ENCODE measurements at regions of chr22 and their contacts with region 1.

Region 1: DNA sequence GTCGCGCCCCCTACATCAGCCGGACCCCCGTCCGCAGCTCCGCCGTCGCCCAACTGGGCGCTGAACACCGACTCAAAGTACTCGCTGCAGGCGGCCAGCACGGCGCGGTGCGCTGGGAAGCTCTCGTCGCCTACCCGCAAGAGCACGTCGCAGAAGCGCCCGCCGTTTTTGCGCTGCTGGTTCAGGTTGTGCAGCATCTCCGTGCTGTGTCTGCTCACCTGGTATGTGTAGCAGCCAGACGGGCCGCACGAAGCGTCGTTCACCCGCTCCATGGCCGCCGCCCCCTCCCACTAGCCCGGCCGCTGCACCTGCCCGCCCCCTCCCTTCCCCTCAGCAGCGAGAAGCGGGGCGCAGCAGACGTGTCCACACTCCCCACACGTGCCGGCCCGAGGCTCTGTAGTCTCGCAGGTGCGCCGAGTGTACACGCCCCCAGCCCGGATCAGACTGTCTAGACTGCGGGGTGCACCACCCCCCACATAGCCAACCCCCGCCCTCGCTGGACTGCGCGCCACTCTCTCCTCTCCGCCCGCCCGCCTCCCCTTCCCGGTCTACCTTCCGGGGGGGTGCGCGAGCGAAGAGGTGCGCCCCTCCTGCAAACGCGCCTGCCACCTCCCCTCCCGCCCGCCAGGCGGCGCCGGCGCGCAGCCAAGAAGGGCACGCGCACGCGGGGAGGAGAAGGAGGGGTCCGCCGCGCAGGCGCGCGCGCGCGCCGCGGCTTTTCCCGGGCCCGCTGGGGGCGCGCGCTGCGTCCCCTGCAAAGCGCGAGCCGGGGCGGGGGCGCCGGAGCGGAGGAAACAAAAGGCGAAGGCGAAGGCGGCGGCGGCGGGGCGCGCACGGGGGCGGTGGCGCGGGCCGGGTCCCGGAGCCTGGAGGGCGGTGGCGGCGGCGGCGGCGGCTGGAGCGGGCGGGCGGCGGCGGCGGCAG is 553 bp downstream of the PATZ1 start:
- DNase-seq: peak; percentile 53 to 91
- H3K4me3 ChIP-seq: peak overlapping the region; percentile 64 to 93 (median 78)
- H3K27ac ChIP-seq: peak overlapping the region; percentile 74; the same call in 1 of the 2 replicates
- H3K4me1 ChIP-seq: peaks cover 0 to 41% (median 34%) of the 10 kb centered on the region in 4 experiments; a peak in 6 of 7 replicates
- H3K27me3 ChIP-seq: no peaks in the 10 kb centered on the region
- CTCF ChIP-seq: peak; percentile 86 to 93 (median 87)
- EP300 ChIP-seq: peak in 1 of 2 experiments; percentile 48; a peak in 1 of 3 replicates
- POLR2A ChIP-seq: peak; percentile 50 to 71
- RAD21 ChIP-seq: peak; percentile 40 to 71

Region 2: GRCh38 chr22:31075961-31076360 is 269.6 kb before region 1 on chr22:
- CTCF ChIA-PET with region 1: no interaction called
- POLR2A ChIA-PET with region 1: no interaction called
- DNase-seq: no peak
- H3K4me3 ChIP-seq: no peak overlapping the region
- H3K27ac ChIP-seq: no peak overlapping the region
- H3K4me1 ChIP-seq: peaks cover 0 to 4% (median 2%) of the 10 kb centered on the region in 4 experiments; a peak in 3 of 7 replicates
- H3K27me3 ChIP-seq: no peaks in the 10 kb centered on the region
- CTCF ChIP-seq: no peak
- EP300 ChIP-seq: no peak
- POLR2A ChIP-seq: no peak
- RAD21 ChIP-seq: no peak

Region 3: DNA sequence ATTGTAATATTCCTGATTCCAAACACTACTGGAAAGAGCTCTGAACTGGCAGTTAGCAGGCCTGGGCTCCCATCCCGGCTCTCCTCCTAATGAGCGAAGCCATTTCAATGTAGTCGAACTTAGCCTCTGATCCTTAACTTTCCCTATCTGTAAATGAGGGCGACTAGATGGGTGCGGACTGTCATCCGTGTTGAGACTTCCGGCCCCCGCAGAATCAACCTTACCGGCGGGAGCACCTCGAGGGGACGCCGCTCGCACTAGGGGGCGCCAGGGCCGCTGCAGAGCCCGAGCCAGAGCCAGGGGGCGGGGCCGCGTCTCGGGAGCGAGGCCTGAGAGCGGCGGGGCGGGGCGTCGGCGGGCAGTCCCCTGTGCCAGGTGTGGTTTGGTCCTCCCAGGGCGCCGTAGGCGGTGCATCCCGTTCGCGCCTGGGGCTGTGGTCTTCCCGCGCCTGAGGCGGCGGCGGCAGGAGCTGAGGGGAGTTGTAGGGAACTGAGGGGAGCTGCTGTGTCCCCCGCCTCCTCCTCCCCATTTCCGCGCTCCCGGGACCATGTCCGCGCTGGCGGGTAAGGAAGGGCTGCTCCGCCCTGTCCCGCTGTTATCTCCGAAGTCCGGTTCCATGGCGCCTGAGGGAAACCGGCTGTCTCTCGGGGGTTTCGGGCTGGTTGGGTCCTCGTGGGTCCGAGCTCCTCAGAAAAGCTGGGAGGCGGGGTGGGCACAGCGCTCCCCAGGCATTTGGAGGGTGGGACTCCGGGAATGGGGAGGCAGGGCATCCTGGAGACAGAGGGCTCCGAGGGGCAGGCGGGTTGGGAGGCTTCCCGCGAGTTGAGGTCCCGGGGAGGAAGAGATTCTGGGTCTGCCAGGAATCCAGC is 133.5 kb before region 1 on chr22 and contains the start of gene LIMK2:
- CTCF ChIA-PET with region 1: no interaction called
- POLR2A ChIA-PET with region 1: interaction called, 11 read pairs
- DNase-seq: peak; percentile 83 to 98
- H3K4me3 ChIP-seq: peak within 1 kb of the TSS; percentile 76 to 96 (median 93)
- H3K27ac ChIP-seq: peak within 1 kb of the TSS; percentile 73; the same call in 1 of the 2 replicates
- H3K4me1 ChIP-seq: peaks cover 0 to 7% (median 4%) of the 10 kb centered on the region in 4 experiments; a peak in 5 of 7 replicates
- H3K27me3 ChIP-seq: no peaks in the 10 kb centered on the region
- CTCF ChIP-seq: peak; percentile 63 to 82 (median 77)
- EP300 ChIP-seq: no peak
- POLR2A ChIP-seq: peak; percentile 87 to 92
- RAD21 ChIP-seq: peak; percentile 56 to 70
- total RNA-seq, gene LIMK2: 37.6 and 41.1 TPM in 2 replicates

Region 4: DNA sequence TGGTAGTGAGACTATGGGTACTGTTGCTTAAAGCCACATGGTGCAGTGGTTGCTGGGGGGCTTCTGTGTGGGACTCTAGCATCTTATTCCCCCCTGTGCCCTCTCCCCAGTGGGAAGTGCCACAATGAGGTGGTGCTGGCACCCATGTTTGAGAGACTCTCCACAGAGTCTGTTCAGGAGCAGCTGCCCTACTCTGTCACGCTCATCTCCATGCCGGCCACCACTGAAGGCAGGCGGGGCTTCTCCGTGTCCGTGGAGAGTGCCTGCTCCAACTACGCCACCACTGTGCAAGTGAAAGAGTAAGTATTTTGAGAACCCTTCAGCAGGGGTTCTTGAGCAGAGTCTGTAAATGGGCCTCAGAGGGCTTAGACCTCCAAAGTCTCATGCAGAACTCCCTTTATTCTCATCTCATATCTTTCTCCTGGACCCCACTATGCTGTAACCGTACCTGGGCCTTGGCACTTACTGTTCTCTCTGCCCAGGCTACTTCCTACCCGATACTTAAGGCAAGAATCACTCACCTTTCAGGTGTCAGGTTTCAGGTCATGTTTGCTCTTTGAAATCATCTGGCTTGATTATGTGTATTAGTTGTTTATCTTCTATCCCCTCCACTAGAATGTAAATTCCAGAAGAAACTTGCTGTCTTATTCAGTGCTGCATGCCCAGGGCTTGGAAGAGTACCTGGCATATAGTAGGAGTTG is 85.7 kb before region 1 on chr22:
- CTCF ChIA-PET with region 1: no interaction called
- POLR2A ChIA-PET with region 1: no interaction called
- DNase-seq: no peak
- H3K4me3 ChIP-seq: no peak overlapping the region
- H3K27ac ChIP-seq: no peak overlapping the region
- H3K4me1 ChIP-seq: no peaks in the 10 kb centered on the region
- H3K27me3 ChIP-seq: no peaks in the 10 kb centered on the region
- CTCF ChIP-seq: no peak
- EP300 ChIP-seq: no peak
- POLR2A ChIP-seq: no peak
- RAD21 ChIP-seq: no peak

Region 5: GRCh38 chr22:31290494-31291471 is 54.8 kb before region 1 on chr22:
- CTCF ChIA-PET with region 1: no interaction called
- POLR2A ChIA-PET with region 1: interaction called, 13 read pairs
- DNase-seq: peak; percentile 53 to 90
- H3K4me3 ChIP-seq: peak overlapping the region; percentile 28 to 62 (median 38)
- H3K27ac ChIP-seq: no peak overlapping the region
- H3K4me1 ChIP-seq: peaks cover 0 to 14% (median 5%) of the 10 kb centered on the region in 4 experiments; a peak in 4 of 7 replicates
- H3K27me3 ChIP-seq: peaks cover 6 to 30% (median 20%) of the 10 kb centered on the region in 4 experiments; a peak in 6 of 7 replicates
- CTCF ChIP-seq: no peak
- EP300 ChIP-seq: no peak
- POLR2A ChIP-seq: peak in 1 of 2 experiments; percentile 71; a peak in 2 of 3 replicates
- RAD21 ChIP-seq: no peak

Region 6: DNA sequence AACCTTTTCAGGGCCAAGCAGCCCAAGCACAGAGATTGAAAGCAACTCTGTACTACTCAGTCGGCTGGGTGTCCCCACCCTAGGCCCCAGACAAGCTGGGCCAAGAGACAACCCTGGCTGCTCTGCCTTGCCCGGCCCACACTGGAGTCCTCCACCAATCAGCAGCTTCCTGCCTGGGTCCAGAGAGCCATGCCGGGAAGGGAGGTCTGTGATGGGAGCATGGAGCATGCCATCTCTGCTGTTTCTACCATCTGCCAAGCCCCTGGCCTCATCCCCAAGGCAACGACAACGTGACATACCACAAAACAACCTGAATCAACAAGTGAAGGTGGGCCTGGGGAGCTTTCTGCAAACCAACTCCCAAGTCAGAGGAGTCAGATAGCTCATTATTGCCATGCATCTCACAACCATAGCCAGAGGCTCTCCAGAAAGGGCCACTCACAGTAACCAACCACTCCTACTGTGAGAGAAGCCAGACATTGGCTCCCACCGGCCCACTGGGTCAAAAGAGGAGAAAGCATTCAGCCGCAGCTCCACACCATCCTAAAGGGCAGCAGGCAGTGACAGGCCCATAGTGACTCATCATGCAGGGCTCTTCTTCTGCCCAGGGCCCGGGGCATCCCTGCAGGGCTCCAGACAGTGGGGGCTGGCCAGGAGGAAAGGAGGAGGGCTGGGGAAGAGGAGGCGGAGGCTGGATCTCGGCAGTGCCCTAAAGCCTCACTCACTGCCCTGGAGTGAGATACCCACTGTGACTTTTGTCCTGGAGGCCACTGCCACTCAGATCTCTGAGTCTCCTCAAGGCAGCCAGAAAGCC is 17.5 kb before region 1 on chr22:
- CTCF ChIA-PET with region 1: interaction called, 3 read pairs
- POLR2A ChIA-PET with region 1: interaction called, 116 read pairs
- DNase-seq: no peak
- H3K4me3 ChIP-seq: no peak overlapping the region
- H3K27ac ChIP-seq: no peak overlapping the region
- H3K4me1 ChIP-seq: no peaks in the 10 kb centered on the region; a peak in 1 of 7 replicates
- H3K27me3 ChIP-seq: no peaks in the 10 kb centered on the region
- CTCF ChIP-seq: no peak
- EP300 ChIP-seq: no peak
- POLR2A ChIP-seq: no peak
- RAD21 ChIP-seq: no peak

Region 7: DNA sequence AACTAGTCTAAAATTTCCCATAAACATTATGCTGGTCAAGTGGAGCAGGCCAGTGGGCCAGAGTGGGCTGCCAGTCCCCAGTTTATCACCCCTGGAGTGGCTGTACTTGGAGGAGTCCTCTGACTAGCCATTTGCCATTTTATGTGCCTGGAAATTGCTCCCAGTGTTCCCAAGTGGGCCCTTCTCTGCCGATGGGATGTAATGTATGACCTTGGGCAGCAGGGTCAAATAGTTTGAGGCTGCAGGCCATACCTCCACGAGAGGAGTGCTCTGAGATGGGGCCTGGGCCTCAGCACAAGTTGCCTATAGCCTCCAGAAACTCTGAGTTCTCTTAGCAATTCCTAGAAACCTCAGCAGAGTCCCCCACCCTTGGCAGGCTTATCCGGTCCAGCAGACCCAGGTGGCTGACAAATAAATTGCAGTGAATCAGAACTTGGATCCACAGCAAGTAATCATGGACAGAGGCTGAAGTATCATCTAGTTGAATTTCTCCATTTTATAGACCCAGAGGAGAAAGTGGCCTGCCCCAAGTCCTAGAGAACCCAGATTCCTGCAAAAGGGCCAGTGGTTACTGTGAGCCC is 18.4 kb after region 1 on chr22:
- CTCF ChIA-PET with region 1: interaction called, 3 read pairs
- POLR2A ChIA-PET with region 1: interaction called, 37 read pairs
- DNase-seq: no peak
- H3K4me3 ChIP-seq: no peak overlapping the region
- H3K27ac ChIP-seq: no peak overlapping the region
- H3K4me1 ChIP-seq: no peaks in the 10 kb centered on the region
- H3K27me3 ChIP-seq: no peaks in the 10 kb centered on the region
- CTCF ChIP-seq: no peak
- EP300 ChIP-seq: no peak
- POLR2A ChIP-seq: no peak
- RAD21 ChIP-seq: no peak

Region 8: GRCh38 chr22:31399211-31400028 is 53.8 kb after region 1 on chr22 and contains the start of gene DRG1:
- CTCF ChIA-PET with region 1: interaction called, 6 read pairs
- POLR2A ChIA-PET with region 1: interaction called, 50 read pairs
- DNase-seq: peak; percentile 85 to 96
- H3K4me3 ChIP-seq: peak within 1 kb of the TSS; percentile 62 to 96 (median 90)
- H3K27ac ChIP-seq: peak within 1 kb of the TSS; percentile 61
- H3K4me1 ChIP-seq: peaks cover 0 to 2% (median 0%) of the 10 kb centered on the region in 4 experiments; a peak in 1 of 7 replicates
- H3K27me3 ChIP-seq: no peaks in the 10 kb centered on the region
- CTCF ChIP-seq: no peak
- EP300 ChIP-seq: no peak
- POLR2A ChIP-seq: peak; percentile 92 to 98
- RAD21 ChIP-seq: peak in 1 of 2 experiments; percentile 33; a peak in 2 of 4 replicates
- total RNA-seq, gene DRG1: 70.8 and 81.9 TPM in 2 replicates